Posterior vena cava (tissue), 2 donors: ENCODE measurements at regions of chr19 and their contacts with region 1.

Region 1: DNA sequence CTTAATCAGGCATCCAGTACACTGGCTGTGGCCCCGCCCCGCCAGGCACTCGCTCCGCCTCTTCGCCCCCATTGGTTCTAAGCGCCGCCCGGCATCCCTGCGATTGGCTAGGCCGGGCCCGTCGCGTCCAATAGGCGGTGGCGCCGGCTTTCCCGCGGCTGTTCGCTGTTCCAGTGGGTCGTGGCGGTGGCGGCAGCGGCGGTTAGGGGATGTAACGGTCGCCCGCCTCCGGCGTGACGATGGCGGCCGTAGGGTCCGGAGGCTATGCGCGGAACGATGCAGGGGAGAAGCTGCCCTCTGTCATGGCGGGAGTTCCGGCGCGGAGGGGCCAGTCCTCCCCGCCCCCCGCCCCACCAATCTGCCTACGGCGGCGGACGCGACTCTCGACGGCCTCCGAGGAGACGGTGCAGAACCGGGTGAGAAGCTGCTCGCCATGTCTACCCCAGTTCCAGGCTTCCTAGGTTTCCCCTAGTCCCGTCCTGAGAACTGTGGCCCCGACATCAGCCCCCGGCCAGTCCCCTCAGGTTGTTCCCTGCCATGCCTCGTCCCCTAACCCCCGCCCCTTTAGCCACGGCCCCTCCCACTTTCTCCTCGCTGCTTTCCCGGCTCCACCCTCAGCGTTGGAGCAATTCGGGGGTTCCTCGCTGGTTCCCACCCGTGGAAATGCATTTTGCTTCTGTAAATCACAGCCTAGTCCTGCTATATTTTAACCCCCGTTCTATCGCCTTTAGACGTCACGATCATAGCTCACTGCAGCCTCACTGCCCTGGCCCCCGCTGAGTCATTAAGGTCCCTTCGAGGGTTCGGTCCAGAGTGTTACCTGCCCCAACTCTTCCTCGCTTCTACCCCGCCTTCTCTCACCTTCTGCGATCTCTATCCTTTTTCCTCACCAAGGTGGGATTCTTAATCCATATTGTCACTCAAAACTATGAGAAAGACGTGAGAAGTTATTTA is at the start of gene WDR62:
- DNase-seq: peak; percentile 98
- total RNA-seq, gene WDR62: 0.37 to 0.71 TPM

Region 2: GRCh38 chr19:36067681-36068080 is 12.7 kb after region 1 on chr19:
- intact Hi-C with region 1: no loop called
- DNase-seq: no peak

Region 3: DNA sequence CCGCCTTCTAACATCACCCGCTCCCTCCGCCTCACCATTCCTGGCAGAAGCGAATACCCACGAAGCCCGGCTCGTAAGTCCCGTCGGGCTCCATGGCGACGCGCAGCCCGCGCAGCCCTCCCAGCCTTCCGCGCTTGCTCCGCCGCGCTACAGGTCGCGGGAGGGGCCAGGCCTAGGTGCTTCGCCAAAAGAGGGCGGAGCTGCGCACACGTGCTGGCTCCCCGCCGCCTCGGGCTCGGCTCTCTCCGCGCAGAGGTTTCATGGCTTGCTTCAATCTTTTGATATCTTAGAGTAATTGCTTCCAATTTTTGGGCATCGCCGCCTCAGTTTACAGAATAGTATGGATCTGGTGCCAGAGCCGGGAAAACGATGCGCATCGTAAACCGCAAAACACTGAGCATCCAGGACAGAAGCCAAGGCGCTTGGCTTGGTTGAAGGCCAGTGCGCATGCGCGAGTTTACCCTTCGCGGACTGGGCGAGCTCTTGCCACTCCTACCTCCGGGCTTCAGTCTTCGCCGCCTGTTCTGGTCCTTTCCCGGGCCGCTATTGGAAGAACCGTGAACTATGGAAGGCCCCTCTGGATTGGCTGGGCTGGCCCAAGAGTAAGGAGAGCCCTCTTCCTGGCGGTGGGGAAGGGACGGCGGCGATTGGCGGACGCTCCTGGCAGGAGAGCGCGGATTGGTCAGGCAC is 59.9 kb after region 1 on chr19 and contains the start of gene POLR2I:
- intact Hi-C with region 1: loop called in 1 of 2 experiments (anchors 5 kb)
- DNase-seq: peak; percentile 100
- total RNA-seq, gene POLR2I: 43.9 to 47.6 TPM